ENCODE measurements at regions of chr5 and their contacts with region 1.

Region 1: DNA sequence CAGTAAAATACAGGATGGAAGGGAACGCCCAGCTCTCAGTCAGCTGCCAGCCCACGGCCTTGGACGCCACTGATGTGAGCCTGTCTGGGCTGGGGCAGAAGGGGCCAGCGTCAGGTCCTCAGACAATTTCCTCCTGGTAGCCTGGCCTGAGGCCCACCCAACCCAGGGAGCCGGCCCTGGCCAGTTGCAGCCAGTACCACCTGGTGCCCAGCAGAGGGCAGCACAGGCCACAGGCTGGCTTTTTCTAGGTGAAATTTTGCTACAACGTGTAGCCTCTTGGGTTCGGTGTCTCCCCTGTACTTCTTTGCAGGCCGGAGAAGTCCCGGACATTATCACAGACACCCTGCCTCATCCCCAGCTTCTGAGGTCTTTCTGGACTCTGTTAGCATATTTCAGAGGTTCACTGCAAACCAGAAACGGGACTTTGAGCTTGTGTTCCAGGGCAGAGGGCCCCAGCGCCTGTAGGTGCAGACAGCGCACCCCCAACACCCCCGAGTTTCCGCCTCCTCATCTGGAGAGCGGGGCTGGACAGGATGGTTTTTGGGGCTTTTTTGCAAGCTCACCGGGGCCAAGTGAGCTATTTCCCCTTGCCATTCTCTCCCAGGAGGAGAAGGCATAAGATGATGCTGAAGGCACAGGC is 45.9 kb upstream of the KCNMB1 start:
- DNase-seq: peak; percentile 69 to 87
- H3K4me3 ChIP-seq: no peak overlapping the region
- H3K27ac ChIP-seq: no peak overlapping the region
- H3K4me1 ChIP-seq: peaks cover 0 to 6% (median 6%) of the 10 kb centered on the region in 4 donors
- H3K27me3 ChIP-seq: peaks cover 0 to 21% (median 6%) of the 10 kb centered on the region in 3 donors
- CTCF ChIP-seq: peak in 5 of 7 experiments; percentile 80 to 98 (median 96)
- EP300 ChIP-seq: no peak
- POLR2A ChIP-seq: no peak

Region 2: GRCh38 chr5:170633235-170634081 is 198.4 kb after region 1 on chr5:
- intact Hi-C with region 1: loop called (anchors 5 kb)
- DNase-seq: peak in 1 of 2 donors; percentile 92
- H3K4me3 ChIP-seq: peak overlapping the region; percentile 12 to 35 (median 28)
- H3K27ac ChIP-seq: peak overlapping the region; percentile 19 to 85 (median 80)
- H3K4me1 ChIP-seq: peaks cover 19 to 41% (median 29%) of the 10 kb centered on the region in 4 donors
- H3K27me3 ChIP-seq: peaks cover 0 to 11% (median 0%) of the 10 kb centered on the region in 3 donors
- CTCF ChIP-seq: peak in 2 of 7 experiments; percentile 14 to 16
- EP300 ChIP-seq: no peak
- POLR2A ChIP-seq: no peak

Measured in stomach (tissue), 19 donors.